ENCODE measurements at regions of chr6 and their contacts with region 1.

Region 1: GRCh38 chr6:133512410-133513016 is 271.4 kb downstream of the EYA4 start:
- DNase-seq: peak; percentile 35
- CTCF ChIP-seq: peak; percentile 50

Region 2: GRCh38 chr6:133184798-133185372 is 327.6 kb before region 1 on chr6:
- in situ Hi-C with region 1: loop called (anchors 25 kb)
- DNase-seq: no peak
- CTCF ChIP-seq: no peak